Activated T-helper 1 cell treated with anti-CD3 and anti-CD28 coated beads, Interleukin-12 subunit alpha, Interleukin-12 subunit beta, Interleukin-2, Interleukin-4 antibody, amounts not matched to agents 30 ng/mL and 10 ng/mL and 1 ng/mL, durations not matched to agents 14 hours and 24 hours and 36 hours (primary cell): ENCODE measurements at regions of chr12 and their contacts with region 1.

Region 1: GRCh38 chr12:6779708-6780432 is 7.5 kb downstream of the LAG3 start:
- DNase-seq: no peak
- H3K4me3 Mint-ChIP-seq: peak overlapping the region; percentile 57
- H3K27ac Mint-ChIP-seq: peak overlapping the region; percentile 91
- H3K4me1 Mint-ChIP-seq: peaks cover 89% of the 10 kb centered on the region
- H3K27me3 Mint-ChIP-seq: no peaks in the 10 kb centered on the region

Region 2: DNA sequence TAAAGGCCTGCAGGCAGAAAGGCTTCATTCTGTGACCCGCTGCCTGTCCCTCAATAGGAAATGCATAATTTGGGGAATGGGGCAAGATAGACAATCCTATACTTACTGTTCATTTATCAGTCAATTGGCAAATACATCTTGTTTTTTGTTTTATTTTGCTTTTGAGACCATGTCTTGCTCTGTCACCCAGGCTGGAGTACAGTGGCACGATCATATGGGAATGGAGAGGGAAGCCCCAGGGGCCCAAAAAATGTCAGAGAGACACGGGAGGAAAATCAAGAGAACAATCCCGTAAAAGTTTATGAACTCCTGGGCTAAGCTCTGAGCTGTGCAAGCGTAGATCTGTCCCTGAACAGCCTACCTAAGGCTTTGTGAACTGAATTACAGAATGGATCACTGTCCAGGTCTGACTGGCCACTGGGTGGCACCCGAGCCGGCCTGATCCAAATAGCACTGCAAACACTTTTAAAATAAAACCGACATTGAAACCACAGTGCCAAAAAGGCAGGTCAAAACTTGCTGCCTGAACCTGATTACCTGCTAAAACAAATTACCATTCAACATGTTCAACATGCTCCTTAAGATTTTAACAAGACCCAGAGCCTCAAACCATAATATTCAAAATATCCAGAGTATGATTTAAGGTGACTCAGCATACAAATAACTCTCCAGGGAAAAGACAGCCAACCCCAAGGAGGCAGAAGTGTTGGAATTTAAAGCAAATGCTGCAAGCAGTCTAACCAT is 44.2 kb before region 1 on chr12:
- intact Hi-C with region 1: loop called (anchors 1 kb)
- DNase-seq: peak; percentile 20
- H3K4me3 Mint-ChIP-seq: no peak overlapping the region
- H3K27ac Mint-ChIP-seq: no peak overlapping the region
- H3K4me1 Mint-ChIP-seq: peaks cover 5% of the 10 kb centered on the region
- H3K27me3 Mint-ChIP-seq: no peaks in the 10 kb centered on the region

Region 3: GRCh38 chr12:6764011-6764828 is 15.7 kb before region 1 on chr12:
- intact Hi-C with region 1: loop called (anchors 2 kb)
- DNase-seq: peak; percentile 64
- H3K4me3 Mint-ChIP-seq: peak overlapping the region; percentile 79
- H3K27ac Mint-ChIP-seq: peak overlapping the region; percentile 57
- H3K4me1 Mint-ChIP-seq: peaks cover 43% of the 10 kb centered on the region
- H3K27me3 Mint-ChIP-seq: peaks cover 21% of the 10 kb centered on the region